Head of caudate nucleus (tissue), 42 donors: ENCODE measurements at regions of chr4 and their contacts with region 1.

Region 1: DNA sequence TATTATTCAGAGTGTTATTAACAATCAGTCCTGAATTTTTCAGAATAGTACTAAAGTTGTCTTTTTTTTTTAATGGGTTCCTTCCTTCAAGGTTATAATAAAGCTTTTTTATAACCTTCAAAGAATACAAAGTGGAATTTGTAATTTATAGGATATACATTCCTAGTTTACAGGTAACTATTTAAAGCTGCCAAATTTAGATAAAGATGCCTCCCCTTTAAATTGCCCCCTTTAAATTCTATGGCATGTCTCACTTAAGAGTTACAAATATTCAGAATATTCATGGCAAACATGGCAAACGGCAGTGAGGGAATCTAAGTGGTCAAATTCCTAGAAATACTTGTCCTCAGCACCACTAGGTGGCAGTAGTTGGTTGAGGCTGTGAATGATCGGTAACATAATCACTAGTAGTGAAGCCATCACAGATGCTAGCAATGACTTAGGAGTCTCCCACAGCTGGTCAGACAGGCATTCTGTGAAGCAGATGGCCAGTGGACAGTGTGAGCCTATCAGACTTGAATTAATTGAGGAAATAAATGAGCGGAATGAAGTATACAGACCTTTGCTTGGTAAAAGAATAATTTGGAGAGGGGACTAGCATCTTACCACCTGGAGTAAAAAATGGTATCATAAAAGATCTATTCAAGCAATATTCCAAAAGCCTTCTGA is 86.4 kb downstream of the CBR4 start:
- DNase-seq: peak in 39 of 42 donors; percentile 19 to 89 (median 69)

Region 2: GRCh38 chr4:168514249-168514852 is 409.3 kb before region 1 on chr4:
- intact Hi-C with region 1: loop called (anchors 10 kb)
- DNase-seq: no peak

Region 3: DNA sequence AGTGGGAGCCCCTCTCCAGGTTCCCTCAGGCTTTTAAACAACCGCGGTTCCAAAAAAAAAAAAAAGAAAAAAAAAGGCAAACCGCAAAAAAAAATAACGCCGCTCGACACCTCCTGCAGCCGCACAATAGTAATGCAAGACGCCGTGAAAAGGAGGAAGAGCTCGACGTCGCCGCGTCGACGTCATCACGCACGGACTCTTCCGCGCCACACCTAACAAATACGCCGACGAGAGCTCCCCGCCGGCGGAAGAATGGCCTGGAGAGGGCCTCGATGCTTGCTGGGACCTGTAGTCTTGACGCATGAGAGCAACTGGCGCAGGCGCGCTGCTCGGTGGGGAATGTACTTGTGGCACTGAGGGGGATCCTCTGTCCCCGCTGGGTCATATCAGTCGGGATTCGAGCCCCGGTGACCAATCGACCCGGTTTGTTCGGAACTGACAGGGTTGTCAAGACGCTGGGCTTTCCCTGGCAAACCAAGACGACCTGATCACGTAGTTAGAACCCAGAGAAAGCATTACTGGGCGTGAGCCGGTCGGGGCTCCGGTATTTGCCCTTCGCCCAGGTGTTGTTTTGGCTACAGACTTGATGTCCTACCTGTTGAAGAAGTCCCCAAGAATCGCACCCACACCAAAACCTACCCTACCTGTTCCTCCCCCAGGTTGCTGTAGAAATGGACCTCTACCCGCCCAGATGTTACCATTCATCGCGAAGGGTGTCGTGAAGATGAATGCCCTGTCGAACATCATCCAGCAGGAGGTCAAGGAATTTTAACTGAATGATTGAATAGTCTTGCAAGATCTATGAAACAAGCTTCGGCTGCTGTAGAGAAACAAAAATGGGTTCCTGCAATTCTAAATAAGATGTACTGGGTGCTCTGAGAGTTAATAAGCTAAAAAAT is 86.7 kb after region 1 on chr4 and contains the start of gene CBR4:
- intact Hi-C with region 1: loop called (anchors 5 kb)
- DNase-seq: peak; percentile 97 to 100 (median 99)

Region 4: GRCh38 chr4:169099771-169100180 is 176.1 kb after region 1 on chr4:
- intact Hi-C with region 1: no loop called
- DNase-seq: no peak

Region 5: DNA sequence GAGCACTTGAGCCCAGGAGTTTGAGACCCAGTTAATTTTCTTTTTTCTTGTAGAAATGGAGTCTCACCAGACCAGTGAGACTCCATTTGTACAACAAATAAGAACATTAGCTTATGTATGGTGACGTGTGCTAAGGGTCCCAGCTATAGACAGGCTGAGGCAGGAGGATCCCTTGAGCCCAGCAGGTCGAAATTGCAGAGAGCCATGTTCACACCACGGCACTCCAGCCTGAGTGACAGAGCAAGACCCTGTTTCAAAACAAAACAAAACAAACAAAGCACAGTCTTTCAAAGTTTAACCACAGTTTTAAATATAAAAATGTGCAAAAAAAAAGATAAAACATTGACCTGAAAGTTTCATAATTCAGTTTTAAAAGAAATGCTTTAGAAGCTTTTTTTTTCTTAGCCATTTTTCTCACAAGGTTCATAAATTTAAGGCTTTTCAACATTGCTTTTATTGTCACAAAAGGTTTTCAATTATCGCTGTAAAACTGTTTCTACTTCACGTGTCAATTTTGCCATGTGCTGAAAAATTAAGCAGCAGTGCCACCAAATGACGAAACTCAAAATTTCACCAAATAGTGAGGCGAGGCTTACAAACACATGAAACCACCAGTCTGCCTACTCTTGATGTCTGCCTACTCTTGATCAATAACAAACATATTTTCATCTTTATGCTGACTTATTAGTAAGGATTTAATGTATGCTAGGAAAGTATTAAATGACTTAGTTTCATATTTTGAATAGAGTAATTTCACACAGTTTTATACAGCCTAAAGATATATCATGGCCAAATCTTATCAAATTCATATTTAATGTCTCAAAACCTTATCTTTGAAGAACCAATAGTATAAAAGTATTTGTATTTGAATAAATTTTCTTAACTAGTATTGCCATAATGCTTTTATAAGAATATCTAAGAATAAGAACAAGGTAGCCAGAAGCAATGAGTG is 562.4 kb after region 1 on chr4:
- intact Hi-C with region 1: loop called (anchors 5 kb)
- DNase-seq: peak in 32 of 42 donors; percentile 14 to 81 (median 50)